OCI-LY7 (cell line): ENCODE measurements at regions of chr19 and their contacts with region 1.

Region 1: GRCh38 chr19:32405431-32406161 is at the start of gene DPY19L3:
- DNase-seq: peak; percentile 95
- H3K4me3 ChIP-seq: peak within 1 kb of the TSS; percentile 96
- H3K27ac ChIP-seq: peak within 1 kb of the TSS; percentile 68
- H3K4me1 ChIP-seq: peaks cover 20% of the 10 kb centered on the region
- CTCF ChIP-seq: no peak
- total RNA-seq, gene DPY19L3: 31.3 and 42.0 TPM in 2 replicates

Region 2: DNA sequence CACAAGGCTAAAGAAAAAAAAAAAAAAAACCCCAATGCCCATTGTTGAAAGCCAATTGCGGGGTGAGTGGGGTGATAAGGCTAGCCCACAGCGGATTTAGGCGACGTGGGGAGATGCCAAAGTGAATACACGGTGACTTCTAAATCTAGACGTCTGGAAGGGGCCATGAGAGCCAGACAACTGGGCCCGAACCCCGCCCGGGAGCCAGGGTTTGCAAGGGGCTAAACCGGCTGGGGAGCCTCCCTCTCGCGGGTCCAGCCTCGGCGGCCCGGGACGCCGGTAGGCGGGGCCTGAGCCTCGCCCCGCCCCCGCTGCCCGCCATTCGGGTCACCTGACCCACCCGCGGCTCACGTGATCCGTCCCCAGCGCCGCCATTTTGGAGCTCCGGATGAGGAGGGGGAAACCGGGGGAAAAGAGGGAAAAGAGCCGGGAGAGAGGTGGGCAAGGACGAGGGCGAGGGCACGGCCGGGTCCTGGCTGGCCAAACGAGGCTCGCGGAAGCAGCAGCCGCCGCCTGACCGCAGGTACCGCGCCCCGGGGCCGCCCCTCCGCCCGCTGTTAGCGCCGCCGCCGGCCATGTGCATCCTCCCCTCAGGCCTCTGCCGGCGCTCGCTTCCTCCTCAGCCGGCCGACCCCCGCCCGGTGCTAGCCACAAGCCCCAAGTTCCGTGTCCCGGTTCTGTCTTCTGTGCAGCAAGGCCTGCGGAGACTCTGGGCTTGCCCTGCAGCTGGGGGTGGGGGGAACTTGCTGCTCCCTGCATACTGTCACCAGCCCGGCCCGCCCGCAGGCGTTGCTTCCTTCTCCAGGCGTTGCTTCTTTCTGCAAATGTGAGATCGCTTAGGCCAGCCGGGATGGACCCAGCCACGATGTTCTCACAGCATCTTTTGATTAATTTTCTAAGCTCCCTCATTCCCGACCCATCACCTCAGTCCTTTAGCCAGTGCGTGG is 60.1 kb before region 1 on chr19 and contains the start of gene ZNF507:
- CTCF ChIA-PET with region 1: no interaction called
- POLR2A ChIA-PET with region 1: interaction called, 3 read pairs
- intact Hi-C with region 1: loop called (anchors 5 kb)
- DNase-seq: peak; percentile 88
- H3K4me3 ChIP-seq: peak within 1 kb of the TSS; percentile 98
- H3K27ac ChIP-seq: peak within 1 kb of the TSS; percentile 63
- H3K4me1 ChIP-seq: peaks cover 23% of the 10 kb centered on the region
- CTCF ChIP-seq: 0 out of 2 replicates have a peak, but pooled peaks have one; percentile 28
- total RNA-seq, gene ZNF507: 13.3 and 14.2 TPM in 2 replicates

Region 3: DNA sequence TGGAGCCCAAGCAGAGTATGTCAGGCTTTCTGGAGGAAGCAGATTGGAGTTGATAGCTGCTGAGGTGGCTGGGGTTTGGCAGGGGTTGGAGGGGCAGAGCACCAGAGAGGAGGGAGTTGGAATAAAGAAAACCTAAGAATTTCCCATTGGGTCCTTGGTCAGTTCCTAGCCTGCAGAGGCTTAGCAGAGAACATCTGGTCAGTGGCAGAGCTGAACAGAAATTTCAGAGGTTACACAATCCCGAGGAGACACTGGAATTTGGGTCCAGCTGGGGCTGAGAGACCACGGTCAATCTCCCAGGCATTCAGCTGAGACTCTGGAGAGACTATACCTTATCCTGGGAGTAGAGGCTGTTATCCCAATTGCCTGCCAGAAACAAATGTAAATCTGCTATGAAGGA is 84.4 kb after region 1 on chr19:
- CTCF ChIA-PET with region 1: no interaction called
- POLR2A ChIA-PET with region 1: no interaction called
- intact Hi-C with region 1: no loop called
- DNase-seq: no peak
- H3K4me3 ChIP-seq: no peak overlapping the region
- H3K27ac ChIP-seq: no peak overlapping the region
- H3K4me1 ChIP-seq: no peaks in the 10 kb centered on the region
- CTCF ChIP-seq: no peak

Region 4: DNA sequence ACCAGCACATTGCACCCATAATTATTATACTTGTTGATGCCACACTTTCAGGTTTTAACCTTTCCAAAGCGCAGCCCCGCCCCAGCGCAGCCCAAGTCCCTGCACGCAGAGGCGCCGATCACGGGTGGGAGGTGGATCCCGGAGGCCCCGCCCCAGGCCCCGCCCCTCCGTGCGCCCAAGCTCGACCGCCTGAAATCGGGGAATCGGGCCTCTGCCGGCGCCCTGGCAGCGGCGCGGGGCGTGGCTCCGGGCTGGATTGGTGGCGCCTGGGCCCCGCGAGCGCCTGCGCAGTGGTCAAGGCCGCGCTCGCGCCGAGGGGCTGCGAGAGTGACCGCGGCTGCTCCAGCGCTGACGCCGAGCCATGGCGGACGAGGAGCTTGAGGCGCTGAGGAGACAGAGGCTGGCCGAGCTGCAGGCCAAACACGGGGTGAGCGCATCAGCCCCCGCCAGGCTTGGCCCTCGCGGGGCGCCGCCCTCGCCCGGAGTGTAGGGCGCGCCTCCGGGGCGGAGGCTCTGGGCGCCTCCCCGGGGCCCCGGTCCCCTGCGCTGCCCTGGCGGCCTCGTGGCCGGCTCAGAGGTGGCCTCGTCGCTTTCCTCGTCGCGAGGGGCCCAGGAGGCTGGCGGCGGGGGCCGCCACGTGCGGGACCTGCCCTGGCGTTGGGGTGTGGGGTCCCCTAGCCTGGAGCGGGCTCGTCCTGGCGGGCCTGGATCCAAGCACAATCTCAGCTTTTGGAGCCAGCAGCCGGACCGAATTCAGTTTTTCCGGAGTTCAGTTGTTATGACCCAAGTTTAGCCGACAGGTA is 175.5 kb after region 1 on chr19 and contains the start of gene PDCD5:
- CTCF ChIA-PET with region 1: no interaction called
- POLR2A ChIA-PET with region 1: interaction called, 4 read pairs
- intact Hi-C with region 1: loop called (anchors 10 kb)
- DNase-seq: peak; percentile 95
- H3K4me3 ChIP-seq: peak within 1 kb of the TSS; percentile 93
- H3K27ac ChIP-seq: peak within 1 kb of the TSS; percentile 32
- H3K4me1 ChIP-seq: peaks cover 10% of the 10 kb centered on the region
- CTCF ChIP-seq: no peak
- total RNA-seq, gene PDCD5: 162 and 200 TPM in 2 replicates